Colonic mucosa (tissue), 4 donors: ENCODE measurements at regions of chr4 and their contacts with region 1.

Region 1: DNA sequence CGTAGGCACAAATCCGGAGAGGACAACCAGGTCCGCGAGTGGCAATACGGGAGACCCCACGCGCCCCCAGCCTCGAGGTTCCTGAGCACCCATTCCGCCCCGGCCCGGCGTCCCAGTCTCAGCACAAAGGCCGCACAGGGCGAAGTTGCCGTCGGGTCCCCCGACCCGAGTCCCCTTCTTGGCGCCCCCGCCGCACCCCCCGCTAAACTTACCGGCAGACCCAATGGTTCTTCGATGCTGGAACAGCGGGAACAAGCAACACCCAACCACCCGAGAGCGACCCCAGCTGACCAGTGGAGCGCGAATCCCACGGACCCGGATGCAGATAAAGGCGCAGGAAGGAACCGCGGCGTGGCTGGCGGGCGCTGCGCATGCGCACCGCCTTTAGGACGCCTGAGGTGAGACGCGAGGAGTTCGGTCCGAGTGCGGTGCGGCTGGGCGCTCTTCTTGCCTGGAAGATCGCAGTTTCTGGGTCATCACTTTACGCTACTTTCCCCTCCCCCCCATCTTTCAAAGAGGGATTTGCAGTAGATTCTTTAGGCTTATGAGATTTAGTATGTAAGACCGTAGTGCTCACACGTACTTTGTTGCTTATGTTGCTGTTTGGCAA is at the start of gene GNPDA2:
- DNase-seq: peak; percentile 92
- H3K4me3 ChIP-seq: peak within 1 kb of the TSS; percentile 77
- H3K27ac ChIP-seq: peak within 1 kb of the TSS; percentile 70
- H3K4me1 ChIP-seq: no peaks in the 10 kb centered on the region
- H3K27me3 ChIP-seq: no peaks in the 10 kb centered on the region
- CTCF ChIP-seq: no peak
- total RNA-seq, gene GNPDA2: 4.7 to 8.9 TPM

Region 2: GRCh38 chr4:44678094-44679041 is 48.0 kb before region 1 on chr4 and contains the start of gene GUF1:
- intact Hi-C with region 1: loop called (anchors 5 kb)
- DNase-seq: peak; percentile 91
- H3K4me3 ChIP-seq: peak within 1 kb of the TSS; percentile 78
- H3K27ac ChIP-seq: peak within 1 kb of the TSS; percentile 87
- H3K4me1 ChIP-seq: peaks cover 9% of the 10 kb centered on the region
- H3K27me3 ChIP-seq: no peaks in the 10 kb centered on the region
- CTCF ChIP-seq: no peak
- total RNA-seq, gene GUF1: 17.8 to 28.7 TPM

Region 3: GRCh38 chr4:44848466-44848865 is 122.1 kb after region 1 on chr4:
- intact Hi-C with region 1: no loop called
- DNase-seq: no peak
- H3K4me3 ChIP-seq: no peak overlapping the region
- H3K27ac ChIP-seq: no peak overlapping the region
- H3K4me1 ChIP-seq: no peaks in the 10 kb centered on the region
- H3K27me3 ChIP-seq: no peaks in the 10 kb centered on the region
- CTCF ChIP-seq: no peak